Ascending aorta (tissue), 2 donors: ENCODE measurements at regions of chr2 and their contacts with region 1.

Region 1: GRCh38 chr2:42922790-42923579 is 130.6 kb upstream of the HAAO start:
- DNase-seq: peak in 1 of 2 donors; percentile 94
- H3K4me3 ChIP-seq: no peak overlapping the region
- H3K27ac ChIP-seq: peak overlapping the region; percentile 97 to 98
- H3K4me1 ChIP-seq: peaks cover 35 to 77% of the 10 kb centered on the region in 2 donors
- H3K27me3 ChIP-seq: no peaks in the 10 kb centered on the region
- CTCF ChIP-seq: no peak

Region 2: GRCh38 chr2:42895134-42895790 is 27.7 kb before region 1 on chr2:
- intact Hi-C with region 1: loop called (anchors 2 kb)
- DNase-seq: peak in 1 of 2 donors; percentile 56
- H3K4me3 ChIP-seq: no peak overlapping the region
- H3K27ac ChIP-seq: peak overlapping the region; percentile 19 to 82
- H3K4me1 ChIP-seq: peaks cover 4 to 10% of the 10 kb centered on the region in 2 donors
- H3K27me3 ChIP-seq: no peaks in the 10 kb centered on the region
- CTCF ChIP-seq: no peak

Region 3: GRCh38 chr2:42906557-42907411 is 16.2 kb before region 1 on chr2:
- intact Hi-C with region 1: loop called (anchors 2 kb)
- DNase-seq: peak in 1 of 2 donors; percentile 83
- H3K4me3 ChIP-seq: peak overlapping the region in 1 of 2 donors; percentile 26
- H3K27ac ChIP-seq: peak overlapping the region; percentile 89 to 90
- H3K4me1 ChIP-seq: peaks cover 37 to 63% of the 10 kb centered on the region in 2 donors
- H3K27me3 ChIP-seq: no peaks in the 10 kb centered on the region
- CTCF ChIP-seq: no peak

Region 4: GRCh38 chr2:42962508-42962953 is 39.5 kb after region 1 on chr2:
- intact Hi-C with region 1: loop called (anchors 2 kb)
- DNase-seq: no peak
- H3K4me3 ChIP-seq: no peak overlapping the region
- H3K27ac ChIP-seq: peak overlapping the region; percentile 88 to 90
- H3K4me1 ChIP-seq: peaks cover 35 to 70% of the 10 kb centered on the region in 2 donors
- H3K27me3 ChIP-seq: no peaks in the 10 kb centered on the region
- CTCF ChIP-seq: no peak